ENCODE measurements at regions of chr20 and their contacts with region 1.

Region 1: DNA sequence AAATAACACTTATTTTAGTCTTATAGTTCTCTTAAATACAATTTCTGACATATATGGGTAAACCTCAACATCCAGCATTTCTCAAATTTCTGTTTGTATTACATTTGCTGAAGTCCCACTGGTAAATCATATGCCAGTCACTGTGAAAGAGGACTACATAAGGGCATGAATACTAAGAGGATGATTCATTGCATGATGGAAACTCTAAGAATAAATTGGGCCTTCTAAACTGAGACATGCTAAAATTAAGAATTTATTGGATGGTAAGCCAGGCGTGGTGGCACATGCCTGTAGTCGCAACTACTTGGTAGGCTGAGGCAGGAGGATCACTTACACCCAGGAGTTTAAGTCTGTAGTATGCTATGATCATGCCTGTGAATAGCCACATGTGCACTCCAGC is 12.1 kb downstream of the DEFB123 start:
- DNase-seq: no peak
- H3K4me3 ChIP-seq: no peak overlapping the region
- CTCF ChIP-seq: no peak

Region 2: DNA sequence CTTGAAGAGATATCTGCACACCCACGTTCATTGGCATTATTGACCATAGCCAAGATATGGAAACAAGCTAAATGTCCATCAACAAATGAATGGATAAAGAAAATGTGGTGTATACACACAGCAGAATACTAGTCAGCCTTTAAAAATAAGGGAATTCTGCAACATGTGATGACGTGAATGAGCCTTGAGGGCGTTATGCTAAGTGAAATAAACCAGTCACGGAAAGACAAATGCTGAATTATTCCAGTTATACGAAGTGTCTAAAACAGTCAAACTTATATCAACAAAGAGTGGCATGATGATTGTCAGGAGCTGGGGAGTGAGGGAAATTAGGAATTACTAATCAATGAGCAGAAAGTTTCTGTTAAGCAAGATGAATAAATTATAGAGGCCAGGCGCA is 38.2 kb before region 1 on chr20:
- CTCF ChIA-PET with region 1: no interaction called
- POLR2A ChIA-PET with region 1: no interaction called
- DNase-seq: no peak
- H3K4me3 ChIP-seq: no peak overlapping the region
- CTCF ChIP-seq: no peak

Region 3: DNA sequence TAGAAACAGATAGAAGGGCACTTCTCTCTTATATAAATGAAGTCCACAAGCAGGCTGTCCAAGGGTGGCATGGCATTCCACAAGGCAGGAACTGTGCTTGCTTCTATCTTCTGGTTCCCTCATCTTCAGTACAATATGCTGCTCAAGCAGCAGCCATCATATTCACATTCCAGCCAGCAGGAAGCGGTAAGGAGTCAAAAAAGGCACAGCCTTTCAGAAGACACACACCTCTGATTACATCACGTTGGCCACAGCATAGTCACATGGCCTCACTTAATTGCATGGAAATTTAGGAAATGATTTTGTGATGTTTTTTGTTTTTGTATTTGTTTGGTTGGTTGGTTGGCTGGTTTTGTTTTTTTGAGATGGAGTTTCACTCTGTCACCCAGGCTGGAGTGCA is 41.6 kb after region 1 on chr20:
- CTCF ChIA-PET with region 1: interaction called, 249 read pairs
- POLR2A ChIA-PET with region 1: no interaction called
- DNase-seq: no peak
- H3K4me3 ChIP-seq: no peak overlapping the region
- CTCF ChIP-seq: peak; percentile 38

Measured in AG04449 (cell line).